CD4-positive, alpha-beta T cell (primary cell): ENCODE measurements at regions of chr16 and their contacts with region 1.

Region 1: DNA sequence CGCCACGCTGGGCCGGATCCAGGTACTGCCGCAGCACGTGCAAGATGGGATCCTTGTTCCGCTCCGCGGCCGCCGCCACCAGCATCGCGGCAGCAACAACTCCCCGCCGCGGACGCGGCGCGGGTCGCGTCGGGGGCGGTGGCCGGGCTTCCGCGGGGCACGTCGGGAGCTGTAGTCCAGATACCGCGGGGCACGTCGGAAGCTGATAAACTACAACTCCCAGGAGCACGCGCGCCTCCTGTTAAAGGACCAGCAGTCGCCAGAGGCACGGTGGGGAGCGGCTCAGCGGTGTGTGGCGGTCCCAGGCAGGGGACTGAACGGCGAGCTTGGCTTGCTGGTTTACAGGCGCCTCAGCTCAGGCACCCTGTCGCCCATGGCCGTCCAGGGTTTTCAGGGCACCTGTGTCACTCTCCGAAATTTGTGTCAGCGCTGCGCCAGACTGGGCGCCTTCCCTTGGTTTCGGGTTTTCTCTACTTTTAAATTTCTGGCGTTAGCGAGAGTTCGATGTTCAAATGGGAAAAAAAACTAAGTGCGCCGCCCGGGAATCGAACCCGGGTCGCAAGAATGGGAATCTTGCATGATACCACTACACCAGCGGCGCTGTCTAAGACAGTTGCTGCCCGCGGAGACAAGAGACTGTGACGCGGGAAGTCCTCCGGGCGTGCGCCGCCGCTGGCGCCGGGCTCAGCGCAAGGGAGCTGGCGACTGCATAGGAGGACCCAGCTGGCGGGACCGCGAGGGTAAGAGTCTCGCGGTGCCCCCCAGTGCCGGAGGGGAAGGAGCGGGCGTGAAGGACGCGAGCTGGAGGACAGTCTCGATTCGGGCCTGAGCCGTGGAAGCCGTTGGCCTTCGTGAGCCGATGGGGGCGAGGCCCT is at the start of gene METTL26:
- DNase-seq: peak; percentile 88 to 97 (median 92)
- ATAC-seq: peak; percentile 85
- H3K4me3 ChIP-seq: peak within 1 kb of the TSS; percentile 73
- H3K4me3 Mint-ChIP-seq: peak within 1 kb of the TSS; percentile 99
- H3K27ac ChIP-seq: peak within 1 kb of the TSS; percentile 82 to 86
- H3K27ac Mint-ChIP-seq: peak within 1 kb of the TSS; percentile 100
- H3K4me1 ChIP-seq: peaks cover 38% of the 10 kb centered on the region
- H3K4me1 Mint-ChIP-seq: peaks cover 8% of the 10 kb centered on the region
- H3K27me3 ChIP-seq: no peaks in the 10 kb centered on the region
- H3K27me3 Mint-ChIP-seq: peaks cover 6% of the 10 kb centered on the region
- CTCF ChIP-seq: no peak
- total RNA-seq, gene METTL26: 39.5 to 39.6 TPM

Region 2: DNA sequence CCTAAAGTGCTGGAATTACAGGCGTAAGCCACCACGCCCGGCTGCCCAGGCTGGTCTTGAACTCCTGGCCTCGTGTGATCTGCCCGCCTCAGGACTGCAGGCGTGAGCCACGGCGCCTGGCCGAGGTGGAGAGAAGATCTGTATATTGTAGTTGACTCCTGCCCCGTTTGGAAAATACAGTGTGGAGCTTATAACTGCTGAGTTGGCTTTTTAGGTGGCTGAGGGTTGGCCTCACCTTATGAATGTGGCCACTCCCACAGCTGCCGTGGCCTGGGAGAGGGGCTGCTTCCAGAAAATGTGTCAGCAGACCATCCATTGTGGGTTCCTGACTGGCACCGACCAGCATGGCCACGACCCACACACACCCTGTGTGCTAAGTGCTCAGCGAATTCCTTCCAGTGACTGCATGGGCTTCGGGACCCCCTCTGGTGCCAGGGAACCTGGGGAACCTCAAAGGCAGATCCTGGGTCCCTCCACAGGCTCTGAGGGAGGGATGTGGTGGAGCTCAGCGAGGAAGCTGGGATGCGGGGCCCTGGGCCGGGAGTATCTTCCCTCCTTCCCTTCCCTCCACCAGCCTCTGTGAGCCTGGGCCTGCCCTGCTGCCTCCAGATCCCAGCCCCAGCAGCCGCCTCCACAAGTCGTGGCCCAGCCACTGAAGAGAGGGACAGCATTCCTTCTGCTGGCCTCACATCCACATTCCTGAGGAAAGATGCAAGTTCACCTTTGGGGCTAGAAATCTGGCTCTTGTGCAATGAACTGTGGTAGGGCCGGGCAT is 221.9 kb before region 1 on chr16:
- CTCF ChIA-PET with region 1: no interaction called
- POLR2A ChIA-PET with region 1: no interaction called
- intact Hi-C with region 1: no loop called
- DNase-seq: no peak
- ATAC-seq: no peak
- H3K4me3 ChIP-seq: no peak overlapping the region
- H3K4me3 Mint-ChIP-seq: no peak overlapping the region
- H3K27ac ChIP-seq: no peak overlapping the region
- H3K27ac Mint-ChIP-seq: no peak overlapping the region
- H3K4me1 ChIP-seq: no peaks in the 10 kb centered on the region
- H3K4me1 Mint-ChIP-seq: no peaks in the 10 kb centered on the region
- H3K27me3 ChIP-seq: no peaks in the 10 kb centered on the region
- H3K27me3 Mint-ChIP-seq: no peaks in the 10 kb centered on the region
- CTCF ChIP-seq: no peak

Region 3: DNA sequence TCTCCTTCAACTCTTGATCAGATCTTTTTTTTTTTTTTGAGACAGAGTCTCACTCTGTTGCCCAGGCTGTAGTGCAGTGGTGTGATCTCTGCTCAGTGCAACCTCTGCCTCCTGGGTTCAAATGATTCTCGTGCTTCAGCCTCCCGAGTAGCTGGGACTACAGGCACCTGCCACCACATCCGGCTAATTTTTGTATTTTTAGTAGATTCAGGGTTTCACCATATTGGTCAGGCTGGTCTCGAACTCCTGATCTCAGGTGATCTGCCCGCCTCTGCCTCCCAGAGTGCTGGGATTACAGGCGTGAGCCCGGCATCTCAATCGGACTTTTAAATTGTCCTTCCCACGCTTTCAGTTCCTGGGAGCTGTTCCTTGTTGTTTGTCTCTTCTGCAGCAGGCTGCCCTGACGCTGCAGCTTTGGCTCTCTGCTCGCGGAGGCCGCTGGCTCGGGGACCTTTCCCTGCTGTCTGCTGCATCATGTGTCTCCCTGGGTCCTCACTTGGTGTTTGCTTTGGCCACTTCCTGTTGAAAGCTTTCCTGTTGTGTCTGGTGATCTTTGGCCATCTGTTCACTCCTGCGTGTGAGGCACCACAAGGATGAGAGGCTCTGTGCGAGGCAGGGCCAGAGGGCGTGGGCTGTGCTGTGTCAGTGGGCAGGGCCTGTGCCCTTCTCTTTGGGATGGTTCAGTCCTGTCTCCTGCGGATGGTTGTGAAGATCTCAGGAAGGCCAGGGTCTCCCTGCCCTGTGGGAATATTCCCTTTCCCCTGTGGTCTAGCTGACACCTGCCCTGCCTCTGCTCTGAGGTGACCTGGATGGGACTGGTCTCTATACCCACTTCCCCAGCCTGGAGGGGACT is 127.3 kb before region 1 on chr16:
- CTCF ChIA-PET with region 1: no interaction called
- POLR2A ChIA-PET with region 1: no interaction called
- intact Hi-C with region 1: no loop called
- DNase-seq: no peak
- ATAC-seq: no peak
- H3K4me3 ChIP-seq: no peak overlapping the region
- H3K4me3 Mint-ChIP-seq: no peak overlapping the region
- H3K27ac ChIP-seq: no peak overlapping the region
- H3K27ac Mint-ChIP-seq: no peak overlapping the region
- H3K4me1 ChIP-seq: no peaks in the 10 kb centered on the region
- H3K4me1 Mint-ChIP-seq: no peaks in the 10 kb centered on the region
- H3K27me3 ChIP-seq: no peaks in the 10 kb centered on the region
- H3K27me3 Mint-ChIP-seq: no peaks in the 10 kb centered on the region
- CTCF ChIP-seq: no peak

Region 4: DNA sequence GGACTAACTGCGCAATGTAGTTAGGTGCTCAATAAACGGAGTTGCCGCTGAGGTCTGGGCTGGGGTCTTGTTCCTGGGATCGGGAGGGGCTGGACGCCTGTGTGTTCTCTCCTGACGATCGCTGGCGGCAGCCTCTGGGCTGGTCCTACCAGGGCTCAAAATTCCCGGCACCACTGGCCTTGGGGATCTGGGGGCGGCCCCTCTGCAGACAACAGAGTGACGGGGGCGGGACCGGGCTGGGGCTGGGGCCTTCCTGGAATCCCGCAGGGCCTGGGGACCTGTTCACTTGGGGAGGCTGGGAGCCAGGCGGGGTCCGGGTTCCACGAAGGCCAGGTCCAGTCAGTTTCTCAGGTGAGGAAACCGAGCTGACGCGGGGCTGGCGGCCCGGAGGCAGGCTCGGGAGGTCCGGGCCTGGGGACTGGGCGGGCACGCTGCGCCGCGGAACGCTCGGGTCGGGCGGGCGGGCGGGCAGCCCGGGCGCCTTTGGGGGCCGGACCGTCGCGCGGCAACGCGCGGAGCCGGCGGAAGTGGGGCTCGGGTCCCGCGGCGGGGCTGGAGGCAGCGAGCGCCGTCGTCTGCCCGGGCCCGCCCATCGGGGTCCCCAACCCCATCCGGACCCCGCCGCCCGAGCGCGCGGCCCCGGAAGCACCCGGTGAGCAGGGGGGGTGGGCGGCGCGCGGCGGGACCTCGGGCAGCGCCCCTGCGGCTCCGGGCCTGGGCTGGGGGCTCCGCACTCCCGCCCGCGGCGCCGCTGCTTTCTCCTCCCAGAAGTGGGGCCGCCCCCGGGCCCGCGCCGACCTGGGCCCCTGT is 66.8 kb before region 1 on chr16 and contains the start of gene PIGQ:
- CTCF ChIA-PET with region 1: no interaction called
- POLR2A ChIA-PET with region 1: interaction called, 3 read pairs
- intact Hi-C with region 1: loop called in 1 of 2 experiments (anchors 1 kb)
- DNase-seq: peak; percentile 37 to 84 (median 58)
- ATAC-seq: peak; percentile 77
- H3K4me3 ChIP-seq: peak within 1 kb of the TSS; percentile 65
- H3K4me3 Mint-ChIP-seq: peak within 1 kb of the TSS; percentile 92
- H3K27ac ChIP-seq: peak within 1 kb of the TSS; percentile 64 to 70
- H3K27ac Mint-ChIP-seq: peak within 1 kb of the TSS; percentile 85
- H3K4me1 ChIP-seq: peaks cover 55% of the 10 kb centered on the region
- H3K4me1 Mint-ChIP-seq: peaks cover 33% of the 10 kb centered on the region
- H3K27me3 ChIP-seq: no peaks in the 10 kb centered on the region
- H3K27me3 Mint-ChIP-seq: no peaks in the 10 kb centered on the region
- CTCF ChIP-seq: no peak
- total RNA-seq, gene PIGQ: 22.8 to 27.0 TPM

Region 5: GRCh38 chr16:589658-590159 is 46.7 kb before region 1 on chr16 and contains the start of gene RAB40C:
- CTCF ChIA-PET with region 1: interaction called, 3 read pairs
- POLR2A ChIA-PET with region 1: interaction called, 18 read pairs
- intact Hi-C with region 1: loop called (anchors 1 to 2 kb)
- DNase-seq: peak; percentile 98 to 100 (median 99)
- ATAC-seq: peak; percentile 80
- H3K4me3 ChIP-seq: peak within 1 kb of the TSS; percentile 80
- H3K4me3 Mint-ChIP-seq: peak within 1 kb of the TSS; percentile 98
- H3K27ac ChIP-seq: peak within 1 kb of the TSS; percentile 84 to 88
- H3K27ac Mint-ChIP-seq: peak within 1 kb of the TSS; percentile 95
- H3K4me1 ChIP-seq: peaks cover 42% of the 10 kb centered on the region
- H3K4me1 Mint-ChIP-seq: peaks cover 16% of the 10 kb centered on the region
- H3K27me3 ChIP-seq: no peaks in the 10 kb centered on the region
- H3K27me3 Mint-ChIP-seq: no peaks in the 10 kb centered on the region
- CTCF ChIP-seq: no peak
- total RNA-seq, gene RAB40C: 8.9 to 9.5 TPM

Region 6: DNA sequence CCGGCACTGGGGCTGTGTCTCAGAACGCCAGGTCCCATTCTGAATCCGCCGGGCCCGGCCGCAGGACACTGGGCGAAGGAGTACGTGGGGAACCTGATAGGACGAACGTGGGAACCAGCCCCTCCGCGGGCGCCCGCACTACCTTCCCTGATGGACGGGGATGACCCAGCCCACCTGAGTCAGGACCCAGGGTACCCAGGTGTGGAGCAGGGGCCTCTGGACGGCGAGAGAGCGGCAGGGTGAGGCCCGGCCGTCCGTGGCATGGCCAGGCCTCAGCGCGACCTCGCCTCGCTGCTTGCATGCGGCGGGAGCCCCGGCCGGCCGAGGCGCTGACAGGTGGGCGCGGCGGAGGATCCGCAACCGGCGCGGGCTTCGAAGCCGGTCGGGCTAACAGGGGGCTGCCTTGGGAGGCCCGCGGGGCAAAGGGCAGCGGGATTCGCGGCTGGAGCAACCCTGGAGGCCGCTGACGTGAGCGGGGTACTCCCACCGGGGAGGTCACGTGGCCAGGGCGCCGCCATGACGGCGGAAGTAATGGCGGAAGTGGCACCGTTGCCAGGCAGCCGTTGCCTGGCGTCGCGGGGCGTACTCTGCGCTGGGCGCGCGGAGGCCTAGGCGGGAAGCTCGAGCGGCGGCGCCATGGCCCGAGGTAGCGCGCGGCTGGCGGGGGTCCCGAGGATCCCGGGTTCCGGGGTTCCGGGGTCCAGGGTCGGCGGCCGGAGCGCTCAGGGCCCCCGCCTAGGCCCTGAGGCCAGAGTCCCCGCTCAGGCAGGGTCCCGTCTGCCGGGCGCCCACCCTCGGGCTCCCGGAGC is 12.5 kb after region 1 on chr16 and contains the start of gene WDR90:
- CTCF ChIA-PET with region 1: interaction called, 6 read pairs
- POLR2A ChIA-PET with region 1: interaction called, 15 read pairs
- intact Hi-C with region 1: no loop called
- DNase-seq: peak; percentile 83 to 96 (median 90)
- ATAC-seq: peak; percentile 97
- H3K4me3 ChIP-seq: peak within 1 kb of the TSS; percentile 64
- H3K4me3 Mint-ChIP-seq: peak within 1 kb of the TSS; percentile 82
- H3K27ac ChIP-seq: peak within 1 kb of the TSS; percentile 79 to 80
- H3K27ac Mint-ChIP-seq: peak within 1 kb of the TSS; percentile 66
- H3K4me1 ChIP-seq: peaks cover 29% of the 10 kb centered on the region
- H3K4me1 Mint-ChIP-seq: no peaks in the 10 kb centered on the region
- H3K27me3 ChIP-seq: no peaks in the 10 kb centered on the region
- H3K27me3 Mint-ChIP-seq: no peaks in the 10 kb centered on the region
- CTCF ChIP-seq: no peak
- total RNA-seq, gene WDR90: 8.1 to 10.3 TPM

Region 7: GRCh38 chr16:684067-684794 is 47.8 kb after region 1 on chr16 and contains the start of gene JMJD8:
- CTCF ChIA-PET with region 1: no interaction called
- POLR2A ChIA-PET with region 1: interaction called, 16 read pairs
- intact Hi-C with region 1: loop called in 1 of 2 experiments (anchors 1 kb)
- DNase-seq: peak; percentile 90 to 99 (median 96)
- ATAC-seq: peak; percentile 59
- H3K4me3 ChIP-seq: peak within 1 kb of the TSS; percentile 63
- H3K4me3 Mint-ChIP-seq: peak within 1 kb of the TSS; percentile 83
- H3K27ac ChIP-seq: peak within 1 kb of the TSS; percentile 62 to 70
- H3K27ac Mint-ChIP-seq: peak within 1 kb of the TSS; percentile 42
- H3K4me1 ChIP-seq: peaks cover 69% of the 10 kb centered on the region
- H3K4me1 Mint-ChIP-seq: peaks cover 9% of the 10 kb centered on the region
- H3K27me3 ChIP-seq: no peaks in the 10 kb centered on the region
- H3K27me3 Mint-ChIP-seq: no peaks in the 10 kb centered on the region
- CTCF ChIP-seq: no peak
- total RNA-seq, gene JMJD8: 22.0 to 23.6 TPM

Region 8: GRCh38 chr16:689175-689901 is 52.9 kb after region 1 on chr16:
- CTCF ChIA-PET with region 1: no interaction called
- POLR2A ChIA-PET with region 1: interaction called, 12 read pairs
- intact Hi-C with region 1: loop called in 1 of 2 experiments (anchors 1 kb)
- DNase-seq: peak in 1 of 14 experiments; percentile 44
- ATAC-seq: no peak
- H3K4me3 ChIP-seq: peak overlapping the region; percentile 88
- H3K4me3 Mint-ChIP-seq: peak overlapping the region; percentile 96
- H3K27ac ChIP-seq: peak overlapping the region; percentile 69 to 73
- H3K27ac Mint-ChIP-seq: peak overlapping the region; percentile 88
- H3K4me1 ChIP-seq: peaks cover 52% of the 10 kb centered on the region
- H3K4me1 Mint-ChIP-seq: peaks cover 15% of the 10 kb centered on the region
- H3K27me3 ChIP-seq: no peaks in the 10 kb centered on the region
- H3K27me3 Mint-ChIP-seq: no peaks in the 10 kb centered on the region
- CTCF ChIP-seq: no peak